Activated CD8-positive, alpha-beta T cell treated with anti-CD3 and anti-CD28 coated beads for 36 hours (primary cell): ENCODE measurements at regions of chr17 and their contacts with region 1.

Region 1: DNA sequence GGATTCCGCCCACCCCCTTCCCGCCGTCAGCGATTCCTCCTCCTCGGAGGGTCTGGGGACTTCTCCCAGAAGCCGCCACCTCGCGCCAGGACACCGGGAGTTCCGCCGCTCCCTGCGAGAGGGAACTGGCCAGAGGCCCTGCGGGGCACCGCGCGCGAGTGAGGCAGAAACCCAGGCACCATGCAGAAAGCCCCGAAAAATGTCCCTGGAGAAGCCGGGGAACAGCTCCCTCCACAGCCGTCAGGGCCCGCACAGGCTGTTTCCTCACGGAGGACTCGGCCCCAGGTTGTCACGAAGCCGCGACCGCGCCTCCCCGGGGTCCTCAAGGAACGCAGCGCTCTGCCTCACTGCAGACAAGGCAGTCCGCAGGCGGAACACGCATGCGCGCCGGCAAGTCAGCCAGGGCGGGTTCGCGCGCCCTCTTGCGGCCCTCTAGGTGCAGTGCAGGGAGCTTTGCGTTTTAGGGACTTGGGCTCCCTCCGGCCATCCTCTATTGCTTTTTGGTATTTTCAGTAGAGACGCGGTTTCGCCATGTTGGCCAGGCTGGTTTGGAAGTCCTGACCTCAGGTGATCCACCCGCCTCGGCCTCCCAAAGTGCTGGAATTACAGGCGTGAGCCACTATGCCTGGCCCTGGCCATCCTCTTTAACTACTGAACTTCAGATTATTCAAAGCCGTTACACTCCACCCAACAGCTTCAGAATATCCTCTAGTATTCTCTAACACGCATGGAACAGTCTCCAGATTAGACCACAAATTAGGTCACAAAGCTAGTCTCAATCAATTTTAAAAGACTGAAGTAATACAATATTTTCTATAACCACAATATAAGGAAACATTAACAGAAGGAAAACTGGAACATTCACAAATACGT is 20.3 kb upstream of the ZNF287 start:
- DNase-seq: peak; percentile 95
- ATAC-seq: peak; percentile 97
- H3K4me3 Mint-ChIP-seq: peak overlapping the region; percentile 65
- H3K27ac Mint-ChIP-seq: no peak overlapping the region
- H3K4me1 Mint-ChIP-seq: peaks cover 7% of the 10 kb centered on the region
- H3K27me3 Mint-ChIP-seq: peaks cover 21% of the 10 kb centered on the region
- CTCF ChIP-seq: peak; percentile 97

Region 2: GRCh38 chr17:16407911-16408588 is 181.3 kb before region 1 on chr17:
- CTCF ChIA-PET with region 1: no interaction called
- POLR2A ChIA-PET with region 1: no interaction called
- intact Hi-C with region 1: no loop called
- DNase-seq: peak; percentile 51
- ATAC-seq: peak; percentile 24
- H3K4me3 Mint-ChIP-seq: no peak overlapping the region
- H3K27ac Mint-ChIP-seq: no peak overlapping the region
- H3K4me1 Mint-ChIP-seq: no peaks in the 10 kb centered on the region
- H3K27me3 Mint-ChIP-seq: peaks cover 11% of the 10 kb centered on the region
- CTCF ChIP-seq: no peak

Region 3: GRCh38 chr17:16463358-16464302 is 125.7 kb before region 1 on chr17:
- CTCF ChIA-PET with region 1: no interaction called
- POLR2A ChIA-PET with region 1: no interaction called
- intact Hi-C with region 1: no loop called
- DNase-seq: no peak
- ATAC-seq: no peak
- H3K4me3 Mint-ChIP-seq: no peak overlapping the region
- H3K27ac Mint-ChIP-seq: no peak overlapping the region
- H3K4me1 Mint-ChIP-seq: no peaks in the 10 kb centered on the region
- H3K27me3 Mint-ChIP-seq: no peaks in the 10 kb centered on the region
- CTCF ChIP-seq: no peak

Region 4: DNA sequence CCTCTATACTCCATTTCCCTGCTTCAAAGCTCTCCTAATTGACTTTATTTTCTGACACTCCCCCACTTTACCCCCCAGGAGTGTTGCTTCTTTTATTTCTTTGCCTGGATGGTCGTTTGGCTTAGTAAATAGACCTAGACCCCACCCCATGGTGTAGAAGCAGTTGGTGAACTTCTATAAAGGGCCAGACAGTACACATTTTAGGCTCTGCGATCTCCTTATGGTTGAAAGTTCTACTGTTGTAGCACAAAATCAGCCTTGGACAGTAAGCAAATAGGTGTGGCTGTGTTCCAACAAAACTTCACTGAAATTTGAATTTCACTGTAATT is 52.2 kb before region 1 on chr17:
- CTCF ChIA-PET with region 1: interaction called, 50 read pairs
- POLR2A ChIA-PET with region 1: interaction called, 3 read pairs
- intact Hi-C with region 1: loop called (anchors 1 kb)
- DNase-seq: no peak
- ATAC-seq: no peak
- H3K4me3 Mint-ChIP-seq: peak overlapping the region; percentile 94
- H3K27ac Mint-ChIP-seq: no peak overlapping the region
- H3K4me1 Mint-ChIP-seq: peaks cover 10% of the 10 kb centered on the region
- H3K27me3 Mint-ChIP-seq: no peaks in the 10 kb centered on the region
- CTCF ChIP-seq: no peak

Region 5: DNA sequence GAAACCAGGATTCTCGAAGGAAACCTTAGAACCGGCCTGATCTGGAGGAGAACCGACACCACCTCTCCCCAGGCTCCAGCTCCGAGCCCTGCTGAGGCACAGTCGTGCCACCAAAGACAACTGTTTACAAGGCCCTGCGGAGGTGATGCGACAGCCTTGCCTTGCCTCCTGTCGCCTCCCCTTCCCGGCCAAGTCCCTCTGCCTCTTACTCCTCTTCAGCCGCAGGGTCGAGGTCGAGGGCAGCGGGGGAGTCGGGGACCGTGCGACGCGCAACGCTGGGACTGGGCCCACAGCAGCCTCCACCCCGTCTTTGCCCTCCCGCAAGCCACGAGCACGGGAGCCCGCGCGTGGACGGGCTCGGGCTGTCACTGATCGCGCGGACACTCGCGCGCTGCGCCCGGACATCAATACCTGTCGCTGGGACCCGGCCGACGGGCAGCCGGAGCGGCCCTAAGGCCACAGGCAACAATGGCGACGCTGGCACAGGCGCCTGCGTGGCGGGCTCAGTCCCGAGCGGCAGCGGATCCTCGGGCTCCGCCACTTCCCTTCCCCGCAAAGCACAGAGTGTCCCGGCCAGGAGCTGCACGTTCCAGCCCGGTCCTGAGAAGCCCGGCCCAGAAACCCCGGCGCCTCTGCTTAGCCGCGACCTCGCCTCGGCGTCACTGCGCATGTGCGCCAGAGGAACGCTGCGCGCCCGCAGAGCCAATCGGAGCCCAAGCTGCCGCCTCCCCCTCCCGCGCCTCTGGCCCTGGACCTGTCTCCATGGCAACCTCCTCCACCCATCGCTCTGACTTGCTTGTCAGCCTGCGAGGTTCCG is 20.6 kb before region 1 on chr17 and contains the start of gene ZNF287:
- CTCF ChIA-PET with region 1: interaction called, 41 read pairs
- POLR2A ChIA-PET with region 1: interaction called, 4 read pairs
- intact Hi-C with region 1: no loop called
- DNase-seq: peak; percentile 95
- ATAC-seq: peak; percentile 98
- H3K4me3 Mint-ChIP-seq: peak within 1 kb of the TSS; percentile 78
- H3K27ac Mint-ChIP-seq: peak within 1 kb of the TSS; percentile 65
- H3K4me1 Mint-ChIP-seq: peaks cover 16% of the 10 kb centered on the region
- H3K27me3 Mint-ChIP-seq: peaks cover 3% of the 10 kb centered on the region
- CTCF ChIP-seq: no peak
- total RNA-seq, gene ZNF287: 6.4 to 9.5 TPM

Region 6: GRCh38 chr17:16599537-16599936 is 10.2 kb after region 1 on chr17:
- CTCF ChIA-PET with region 1: interaction called, 12 read pairs
- POLR2A ChIA-PET with region 1: no interaction called
- intact Hi-C with region 1: no loop called
- DNase-seq: no peak
- ATAC-seq: no peak
- H3K4me3 Mint-ChIP-seq: no peak overlapping the region
- H3K27ac Mint-ChIP-seq: no peak overlapping the region
- H3K4me1 Mint-ChIP-seq: no peaks in the 10 kb centered on the region
- H3K27me3 Mint-ChIP-seq: peaks cover 4% of the 10 kb centered on the region
- CTCF ChIP-seq: no peak